Activated CD4-positive, alpha-beta memory T cell treated with anti-CD3 and anti-CD28 coated beads, Interleukin-2, amount 10 ng/mL, durations not matched to agents 7 days and 5 days (primary cell): ENCODE measurements at regions of chr7 and their contacts with region 1.

Region 1: DNA sequence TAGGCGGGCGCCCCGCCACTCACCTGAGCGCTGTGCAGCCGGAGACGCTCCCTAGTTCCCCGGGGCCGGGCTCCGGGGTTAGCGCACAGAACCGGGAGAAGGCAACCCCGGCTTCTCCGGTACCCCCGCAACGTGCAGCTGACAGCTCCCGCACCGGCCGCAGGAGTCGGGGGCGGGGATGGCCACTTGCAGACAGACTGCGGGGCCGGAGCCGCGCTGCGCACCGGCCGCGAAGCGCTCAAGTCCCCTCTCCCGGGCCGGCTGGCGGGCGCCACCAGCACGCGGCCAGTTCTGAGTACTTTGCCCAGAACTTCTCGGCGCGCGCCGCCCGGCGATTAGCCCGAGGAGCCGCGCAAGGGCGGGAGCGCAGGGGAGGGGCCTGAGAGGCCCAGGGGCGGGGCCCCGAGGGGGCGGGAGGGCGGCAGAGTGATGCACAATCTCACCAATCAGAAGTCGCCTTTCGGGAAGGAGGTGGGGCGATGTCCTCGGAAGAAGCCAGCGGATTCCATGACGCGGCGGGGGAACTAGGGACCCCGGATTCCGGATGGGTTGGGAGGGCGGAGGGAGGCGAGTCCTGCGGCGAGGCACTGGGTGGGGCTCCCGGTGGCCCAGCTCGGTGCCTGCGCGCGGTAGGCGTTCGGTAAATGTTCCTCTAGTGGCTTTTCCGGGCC is at the start of gene OSBPL3:
- DNase-seq: peak; percentile 96
- H3K4me3 Mint-ChIP-seq: peak within 1 kb of the TSS; percentile 90
- H3K27ac Mint-ChIP-seq: peak within 1 kb of the TSS; percentile 88
- H3K4me1 Mint-ChIP-seq: peaks cover 59% of the 10 kb centered on the region
- H3K27me3 Mint-ChIP-seq: no peaks in the 10 kb centered on the region
- total RNA-seq, gene OSBPL3: 90.3 to 99.9 TPM

Region 2: DNA sequence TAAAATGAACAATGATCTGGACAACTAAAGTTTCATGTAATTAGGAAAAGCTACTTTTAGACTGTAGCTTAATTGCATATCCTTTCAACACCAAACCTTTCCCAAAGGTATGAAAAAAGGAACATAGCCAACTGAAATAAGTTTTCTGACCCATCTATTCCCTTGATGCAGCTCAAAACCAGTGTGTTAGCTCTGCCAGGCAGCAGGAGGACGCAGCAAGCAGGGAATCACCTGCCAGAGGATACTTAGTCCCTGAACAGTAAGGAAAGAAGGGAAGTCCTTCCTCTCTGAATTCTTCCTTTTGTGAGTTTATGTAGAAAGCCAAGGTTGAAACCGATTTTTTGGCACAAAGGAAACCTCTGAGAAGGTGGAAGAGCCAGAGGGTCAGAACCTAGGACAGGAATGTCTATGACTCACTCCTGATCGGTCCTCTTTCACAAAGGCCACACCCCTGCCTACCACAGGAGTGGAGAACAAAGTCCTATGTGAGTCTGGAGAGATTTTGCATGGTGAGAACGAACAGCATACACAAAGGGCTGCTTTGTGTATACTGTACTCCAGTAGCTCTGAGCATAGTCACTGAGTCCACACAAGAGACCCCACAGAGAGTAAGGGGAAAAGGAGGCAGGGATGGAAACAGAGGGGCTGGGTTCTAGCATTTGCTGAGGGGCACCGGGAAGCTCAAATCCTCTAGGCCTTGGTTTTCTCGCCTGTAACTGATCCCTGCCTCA is 153.9 kb before region 1 on chr7:
- CTCF ChIA-PET with region 1: interaction called, 90 read pairs
- POLR2A ChIA-PET with region 1: interaction called, 135 read pairs
- DNase-seq: peak; percentile 26
- H3K4me3 Mint-ChIP-seq: peak overlapping the region; percentile 43
- H3K27ac Mint-ChIP-seq: peak overlapping the region; percentile 87
- H3K4me1 Mint-ChIP-seq: peaks cover 83% of the 10 kb centered on the region
- H3K27me3 Mint-ChIP-seq: no peaks in the 10 kb centered on the region

Region 3: GRCh38 chr7:24898691-24899090 is 81.3 kb before region 1 on chr7:
- CTCF ChIA-PET with region 1: interaction called, 5 read pairs
- POLR2A ChIA-PET with region 1: interaction called, 38 read pairs
- DNase-seq: no peak
- H3K4me3 Mint-ChIP-seq: peak overlapping the region; percentile 2
- H3K27ac Mint-ChIP-seq: peak overlapping the region; percentile 67
- H3K4me1 Mint-ChIP-seq: peaks cover 76% of the 10 kb centered on the region
- H3K27me3 Mint-ChIP-seq: no peaks in the 10 kb centered on the region

Region 4: DNA sequence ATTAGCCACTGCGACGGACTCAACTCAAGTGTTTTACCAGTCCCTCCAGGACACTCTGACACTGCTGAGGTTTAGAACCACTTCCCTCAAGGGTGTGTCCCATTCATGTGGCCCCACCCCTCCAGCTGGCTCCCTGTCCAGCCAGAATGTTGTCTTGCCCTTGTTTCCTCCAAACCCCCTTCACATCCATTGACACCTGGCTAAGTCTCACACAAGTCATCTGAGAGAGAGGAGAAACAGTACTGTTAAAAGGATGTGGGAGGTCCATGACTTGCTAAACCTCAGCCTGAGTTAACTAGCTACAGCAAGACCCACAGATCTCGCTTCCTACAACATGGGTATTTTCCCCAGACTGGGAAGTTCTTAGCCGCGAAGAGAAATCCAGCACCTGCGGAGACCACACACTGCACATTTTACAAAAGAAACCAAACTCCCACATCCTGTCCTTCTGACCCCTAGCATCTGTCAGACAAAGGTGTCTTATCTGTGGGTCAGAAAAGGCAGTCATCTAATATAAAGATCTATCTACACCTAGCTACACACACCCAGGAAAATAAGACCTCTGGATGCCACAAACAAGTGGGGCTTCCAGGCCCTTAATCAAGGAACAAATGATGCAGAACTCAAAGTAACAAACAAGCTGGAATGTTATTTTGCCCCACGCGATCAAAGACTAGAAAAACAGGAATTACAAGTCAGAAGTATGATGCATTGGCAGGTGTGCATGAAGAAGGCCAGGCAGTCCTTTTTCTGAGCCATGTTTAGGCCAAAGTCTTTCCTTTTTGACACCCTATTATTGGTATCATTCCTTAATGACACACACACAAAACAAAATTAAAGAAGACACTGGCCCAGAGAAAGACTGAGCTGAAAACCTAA is 13.9 kb before region 1 on chr7:
- CTCF ChIA-PET with region 1: interaction called, 19 read pairs
- POLR2A ChIA-PET with region 1: interaction called, 68 read pairs
- DNase-seq: peak; percentile 61
- H3K4me3 Mint-ChIP-seq: peak overlapping the region; percentile 2
- H3K27ac Mint-ChIP-seq: peak overlapping the region; percentile 74
- H3K4me1 Mint-ChIP-seq: peaks cover 84% of the 10 kb centered on the region
- H3K27me3 Mint-ChIP-seq: no peaks in the 10 kb centered on the region

Region 5: DNA sequence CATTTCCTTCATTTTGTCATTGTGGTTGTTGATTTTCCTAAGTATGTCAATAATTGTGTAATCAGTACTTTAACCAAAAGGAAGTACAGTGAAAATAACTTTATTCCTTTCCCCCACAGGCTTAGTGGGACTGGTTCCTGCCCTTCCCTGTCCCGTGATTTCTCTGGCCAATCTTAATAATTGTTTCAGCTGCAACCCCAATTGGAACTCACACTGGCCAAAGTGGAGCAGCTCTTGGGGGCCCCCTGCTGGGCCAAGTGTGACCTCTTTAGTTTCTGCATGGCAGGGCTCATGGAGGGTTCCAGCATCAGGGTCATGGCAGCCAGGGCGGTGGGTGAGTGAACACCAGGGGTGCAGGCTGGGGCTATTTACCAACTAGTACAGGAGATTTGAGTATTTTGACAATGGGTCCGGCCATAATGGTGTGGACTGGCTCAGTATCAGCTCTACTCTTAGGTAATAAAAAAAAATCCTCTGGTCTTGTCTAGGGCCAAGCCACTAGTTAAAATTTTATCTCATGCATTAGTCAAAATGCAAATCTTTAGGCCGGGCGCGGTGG is 113.3 kb after region 1 on chr7:
- CTCF ChIA-PET with region 1: interaction called, 25 read pairs
- POLR2A ChIA-PET with region 1: interaction called, 3 read pairs
- DNase-seq: peak; percentile 83
- H3K4me3 Mint-ChIP-seq: no peak overlapping the region
- H3K27ac Mint-ChIP-seq: no peak overlapping the region
- H3K4me1 Mint-ChIP-seq: peaks cover 12% of the 10 kb centered on the region
- H3K27me3 Mint-ChIP-seq: peaks cover 12% of the 10 kb centered on the region

Region 6: GRCh38 chr7:25216837-25217236 is 236.8 kb after region 1 on chr7:
- CTCF ChIA-PET with region 1: no interaction called
- POLR2A ChIA-PET with region 1: no interaction called
- DNase-seq: no peak
- H3K4me3 Mint-ChIP-seq: no peak overlapping the region
- H3K27ac Mint-ChIP-seq: no peak overlapping the region
- H3K4me1 Mint-ChIP-seq: no peaks in the 10 kb centered on the region
- H3K27me3 Mint-ChIP-seq: peaks cover 17% of the 10 kb centered on the region